IMR-90 (cell line): ENCODE measurements at regions of chr4 and their contacts with region 1.

Region 1: GRCh38 chr4:168694648-168695047 is 197.8 kb downstream of the PALLD start:
- DNase-seq: peak; percentile 72
- ATAC-seq: peak; percentile 79
- H3K4me3 ChIP-seq: no peak overlapping the region
- H3K27ac ChIP-seq: no peak overlapping the region
- H3K4me1 ChIP-seq: peaks cover 14% of the 10 kb centered on the region
- H3K27me3 ChIP-seq: no peaks in the 10 kb centered on the region
- CTCF ChIP-seq: no peak
- POLR2A ChIP-seq: no peak
- RAD21 ChIP-seq: no peak

Region 2: GRCh38 chr4:168723020-168723419 is 28.4 kb after region 1 on chr4:
- CTCF ChIA-PET with region 1: no interaction called
- POLR2A ChIA-PET with region 1: no interaction called
- dilution Hi-C with region 1: no loop called
- in situ Hi-C with region 1: no loop called
- intact Hi-C with region 1: no loop called
- DNase-seq: peak; percentile 75
- ATAC-seq: peak; percentile 45; the same call in 1 of the 2 replicates
- H3K4me3 ChIP-seq: no peak overlapping the region
- H3K27ac ChIP-seq: no peak overlapping the region
- H3K4me1 ChIP-seq: peaks cover 15% of the 10 kb centered on the region
- H3K27me3 ChIP-seq: no peaks in the 10 kb centered on the region
- CTCF ChIP-seq: no peak
- POLR2A ChIP-seq: no peak
- RAD21 ChIP-seq: no peak

Region 3: DNA sequence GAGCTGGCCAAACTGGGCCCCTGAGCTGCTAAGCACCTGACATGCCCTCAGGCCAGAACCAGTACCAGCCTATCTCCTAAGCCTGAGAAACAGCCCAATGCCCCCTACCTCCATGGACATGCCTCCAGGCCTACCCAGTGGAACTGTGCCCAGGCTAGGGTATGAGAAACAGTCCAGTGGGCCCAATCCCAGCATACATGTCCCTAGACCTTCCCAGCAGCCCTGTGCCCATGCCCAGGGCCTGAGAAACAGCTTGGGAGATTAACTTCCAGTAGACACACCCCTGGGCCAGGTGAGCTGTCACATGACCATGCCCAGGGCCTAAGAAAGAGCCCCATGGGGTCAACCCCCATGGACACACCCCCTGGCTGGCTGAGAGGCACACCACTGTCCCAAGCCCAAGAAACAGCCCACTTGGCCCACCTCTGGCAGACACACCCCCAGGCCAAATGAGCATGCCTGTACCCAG is 236.6 kb after region 1 on chr4:
- CTCF ChIA-PET with region 1: no interaction called
- POLR2A ChIA-PET with region 1: interaction called, 40 read pairs
- dilution Hi-C with region 1: no loop called
- in situ Hi-C with region 1: no loop called
- intact Hi-C with region 1: no loop called
- DNase-seq: no peak
- ATAC-seq: peak; percentile 30; the same call in 1 of the 2 replicates
- H3K4me3 ChIP-seq: no peak overlapping the region
- H3K27ac ChIP-seq: no peak overlapping the region
- H3K4me1 ChIP-seq: no peaks in the 10 kb centered on the region
- H3K27me3 ChIP-seq: no peaks in the 10 kb centered on the region
- CTCF ChIP-seq: no peak
- POLR2A ChIP-seq: no peak
- RAD21 ChIP-seq: no peak